RWPE1 (cell line): ENCODE measurements at regions of chr10 and their contacts with region 1.

Region 1: GRCh38 chr10:72306215-72306760 is 32.6 kb downstream of the DDIT4 start:
- DNase-seq: no peak
- H3K27ac ChIP-seq: peak overlapping the region; percentile 77
- CTCF ChIP-seq: no peak

Region 2: GRCh38 chr10:71822448-71822763 is 483.9 kb before region 1 on chr10:
- CTCF ChIA-PET with region 1: no interaction called
- POLR2A ChIA-PET with region 1: no interaction called
- DNase-seq: no peak
- H3K27ac ChIP-seq: no peak overlapping the region
- CTCF ChIP-seq: no peak

Region 3: DNA sequence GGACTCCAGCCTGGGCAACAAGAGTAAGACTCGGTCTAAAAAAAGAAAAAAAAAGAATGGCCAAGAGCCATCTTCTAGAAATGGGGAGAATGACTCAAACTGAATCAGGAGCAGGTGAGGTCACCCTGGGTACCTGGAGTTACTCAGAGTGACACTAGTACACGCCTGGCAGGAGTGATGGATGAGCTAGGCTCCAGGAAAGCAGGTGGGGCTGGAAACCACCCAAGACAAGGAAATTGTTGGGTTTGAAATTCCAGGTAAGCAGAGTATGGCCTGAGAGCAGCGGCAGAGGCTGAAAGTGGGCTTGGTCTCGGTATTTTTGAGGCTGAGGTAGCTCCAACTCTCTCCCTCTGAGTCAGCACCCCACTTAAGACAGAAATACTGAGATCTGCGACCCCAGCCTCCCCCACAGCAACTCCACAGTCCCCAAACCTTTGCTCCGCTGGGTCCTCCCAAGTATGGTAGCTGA is 14.0 kb before region 1 on chr10:
- CTCF ChIA-PET with region 1: interaction called, 3 read pairs
- POLR2A ChIA-PET with region 1: interaction called, 12 read pairs
- DNase-seq: peak; percentile 97
- H3K27ac ChIP-seq: peak overlapping the region; percentile 83
- CTCF ChIP-seq: no peak